Dorsolateral prefrontal cortex (tissue), 120 donors: ENCODE measurements at regions of chr15 and their contacts with region 1.

Region 1: GRCh38 chr15:69394556-69395282 is 19.4 kb upstream of the KIF23 start:
- DNase-seq: peak; percentile 77 to 91 (median 84)
- H3K4me3 ChIP-seq: peak overlapping the region in 49 of 59 donors; percentile 3 to 58 (median 34)
- H3K27ac ChIP-seq: peak overlapping the region in 2 of 59 donors; percentile 18 to 45
- H3K27me3 ChIP-seq: no peaks in the 10 kb centered on the region
- CTCF ChIP-seq: peak; percentile 89 to 99 (median 98)

Region 2: DNA sequence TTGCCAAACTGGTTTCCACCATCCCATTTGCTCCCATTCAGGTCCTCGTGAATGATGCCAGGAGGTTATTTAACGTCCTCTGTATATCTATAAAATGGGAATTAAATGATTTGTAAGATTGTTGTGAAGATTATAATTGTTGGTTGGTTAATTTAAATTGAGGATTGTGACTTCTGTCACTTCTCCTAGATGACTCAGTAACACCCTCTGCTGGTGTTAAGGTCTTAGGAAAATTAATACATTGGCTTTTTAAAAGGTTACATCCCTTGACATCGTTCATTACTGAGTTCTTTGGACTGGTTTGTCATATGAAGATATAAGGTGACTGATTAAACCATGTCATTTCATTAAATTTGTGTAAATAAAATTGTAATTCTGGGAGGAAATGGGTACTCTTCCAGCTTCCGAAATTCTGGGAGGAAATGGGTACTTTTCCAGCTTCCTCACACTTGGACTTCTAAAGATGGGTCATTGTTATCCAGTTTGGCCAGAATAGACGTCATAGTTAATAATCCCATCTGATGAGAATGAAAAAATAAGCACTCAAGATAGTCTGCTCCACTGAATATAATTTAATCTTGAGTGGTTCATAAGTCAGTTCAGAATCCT is 129.3 kb before region 1 on chr15:
- intact Hi-C with region 1: loop called in 1 of 2 experiments (anchors 5 kb)
- DNase-seq: no peak
- H3K4me3 ChIP-seq: no peak overlapping the region
- H3K27ac ChIP-seq: no peak overlapping the region
- H3K27me3 ChIP-seq: no peaks in the 10 kb centered on the region
- CTCF ChIP-seq: peak in 55 of 56 donors; percentile 33 to 80 (median 66)

Region 3: GRCh38 chr15:69357773-69358771 is 36.6 kb before region 1 on chr15:
- intact Hi-C with region 1: no loop called
- DNase-seq: no peak
- H3K4me3 ChIP-seq: no peak overlapping the region
- H3K27ac ChIP-seq: no peak overlapping the region
- H3K27me3 ChIP-seq: no peaks in the 10 kb centered on the region
- CTCF ChIP-seq: no peak